GM10248 (cell line): ENCODE measurements at regions of chr20 and their contacts with region 1.

Region 1: DNA sequence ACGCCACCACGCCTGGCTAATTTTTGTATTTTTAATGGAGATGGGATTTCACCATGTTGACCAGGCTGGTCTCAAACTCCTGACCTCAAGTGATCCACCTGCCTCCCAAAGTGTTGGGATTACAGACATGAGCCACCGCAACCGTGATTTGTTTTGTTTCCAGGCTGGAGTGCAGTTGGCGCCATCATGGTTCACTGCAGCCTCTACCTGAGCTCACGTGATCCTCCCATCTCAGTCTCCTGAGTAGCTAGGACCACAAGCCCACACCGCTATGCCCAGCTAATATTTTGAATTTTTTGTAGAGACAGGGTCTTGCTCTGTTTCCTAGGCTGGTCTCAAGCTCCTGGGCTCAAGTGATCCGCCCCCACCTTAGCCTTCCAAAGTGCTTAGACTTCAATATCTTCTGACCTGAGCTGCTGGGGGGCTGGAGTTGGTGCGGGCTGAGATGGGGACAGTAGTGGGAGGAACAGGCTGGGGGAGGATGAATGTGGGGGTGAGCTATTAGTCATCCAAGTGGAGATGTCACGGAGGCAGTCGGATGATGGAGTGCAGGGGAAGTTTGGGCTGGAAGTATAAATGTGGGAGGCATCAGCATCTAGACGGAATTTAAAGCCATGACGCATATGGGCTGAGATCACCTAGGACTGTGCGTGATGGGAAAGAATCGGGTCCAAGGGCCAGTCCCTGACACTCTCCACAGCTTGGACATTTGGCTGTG is 23.1 kb upstream of the ZMYND8 start:
- DNase-seq: no peak
- CTCF ChIP-seq: no peak

Region 2: DNA sequence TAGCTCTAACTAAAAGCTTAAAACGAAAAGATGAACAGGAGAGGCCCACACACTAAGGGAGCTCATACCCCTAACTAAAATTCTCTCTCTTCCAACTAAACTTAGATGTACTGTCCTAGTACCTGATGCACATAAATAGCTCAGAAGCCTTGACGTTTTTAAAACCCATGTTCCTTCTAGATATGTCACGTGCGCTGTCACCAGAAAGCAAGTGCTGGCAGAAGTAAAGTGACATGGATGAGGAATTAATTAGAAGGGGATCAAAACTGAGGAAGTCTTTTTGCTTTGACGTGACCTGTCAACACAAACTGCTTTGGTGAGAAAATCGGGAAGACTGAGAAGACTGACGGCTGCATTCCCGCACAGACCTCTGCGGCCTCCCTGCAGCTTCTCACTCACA is 165.6 kb before region 1 on chr20:
- CTCF ChIA-PET with region 1: interaction called, 35 read pairs
- POLR2A ChIA-PET with region 1: no interaction called
- DNase-seq: no peak
- CTCF ChIP-seq: no peak

Region 3: GRCh38 chr20:47252879-47253307 is 126.7 kb before region 1 on chr20:
- CTCF ChIA-PET with region 1: interaction called, 15 read pairs
- POLR2A ChIA-PET with region 1: no interaction called
- DNase-seq: no peak
- CTCF ChIP-seq: no peak

Region 4: GRCh38 chr20:47330933-47331864 is 48.4 kb before region 1 on chr20:
- CTCF ChIA-PET with region 1: interaction called, 37 read pairs
- POLR2A ChIA-PET with region 1: no interaction called
- DNase-seq: no peak
- CTCF ChIP-seq: no peak

Region 5: DNA sequence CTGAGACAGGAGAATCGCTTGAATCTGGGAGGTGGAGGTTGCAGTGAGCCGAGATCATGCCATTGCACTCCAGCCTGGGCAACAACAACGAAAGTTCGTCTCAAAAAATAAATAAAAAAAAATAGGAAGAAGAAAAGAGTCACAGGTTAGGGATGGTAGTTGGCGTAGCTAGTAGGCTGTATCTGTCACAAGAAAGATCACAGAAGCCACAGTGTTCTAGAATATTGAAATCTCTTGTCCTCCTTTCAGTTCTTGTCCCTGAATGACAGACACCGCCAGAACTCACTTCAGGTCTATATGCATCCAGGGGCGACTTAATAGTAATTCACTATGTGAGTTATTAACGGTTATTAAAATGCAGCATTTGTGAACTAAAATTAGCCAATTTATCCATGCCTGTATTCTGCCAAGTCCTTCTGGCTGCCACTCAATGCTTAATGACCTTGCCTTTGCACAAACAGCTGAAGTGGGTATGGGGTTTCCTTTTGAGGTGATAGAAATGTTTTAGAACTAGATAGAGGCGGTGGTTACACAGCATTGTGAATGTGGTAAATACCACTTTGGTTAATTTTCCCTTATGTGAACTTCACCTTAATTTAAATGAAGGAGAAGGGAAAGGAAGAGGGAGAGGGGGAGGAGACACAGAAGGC is 18.2 kb after region 1 on chr20:
- CTCF ChIA-PET with region 1: interaction called, 29 read pairs
- POLR2A ChIA-PET with region 1: no interaction called
- DNase-seq: no peak
- CTCF ChIP-seq: no peak

Region 6: DNA sequence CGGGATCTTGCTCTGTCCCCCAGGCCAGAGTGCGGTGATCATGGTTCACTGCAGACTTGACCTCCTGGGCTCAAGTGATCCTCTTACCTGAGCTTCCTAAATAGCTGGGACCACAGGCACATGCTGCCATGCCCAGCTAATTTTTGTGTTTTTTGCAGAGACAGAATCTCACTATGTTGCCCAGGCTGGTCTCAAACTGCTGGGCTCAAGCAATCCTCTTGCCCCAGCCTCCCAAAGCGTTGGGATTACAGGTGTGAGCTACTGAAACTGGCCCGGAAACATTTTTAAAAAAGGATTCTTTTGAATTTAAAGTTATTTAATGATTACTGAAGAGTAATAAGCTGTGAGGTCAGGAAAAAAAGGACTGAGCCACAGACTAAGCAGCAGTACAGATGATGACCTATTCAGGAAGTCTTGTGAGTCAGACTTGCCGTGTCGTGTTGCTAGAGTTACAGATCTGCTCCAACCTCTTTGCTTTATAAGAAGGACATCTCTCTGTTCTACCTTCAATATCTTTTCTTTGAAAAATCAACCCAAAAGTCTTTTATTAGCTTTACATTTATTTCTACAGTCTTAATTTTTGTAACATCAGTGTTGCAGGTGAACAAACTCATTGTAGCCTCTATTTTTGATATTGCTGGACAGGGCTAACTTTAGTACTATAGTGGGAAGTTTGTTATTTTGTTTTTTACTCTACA is 230.8 kb after region 1 on chr20:
- CTCF ChIA-PET with region 1: interaction called, 12 read pairs
- POLR2A ChIA-PET with region 1: no interaction called
- DNase-seq: peak; percentile 69
- CTCF ChIP-seq: no peak